CD4-positive, alpha-beta memory T cell (primary cell): ENCODE measurements at regions of chr14 and their contacts with region 1.

Region 1: GRCh38 chr14:52272375-52272774 is 4.9 kb downstream of the PTGDR start:
- DNase-seq: peak in 4 of 5 donors; percentile 43 to 49 (median 46)
- H3K4me3 ChIP-seq: no peak overlapping the region
- H3K4me3 Mint-ChIP-seq: peak overlapping the region in 5 of 8 donors; percentile 16 to 73 (median 33)
- H3K27ac ChIP-seq: no peak overlapping the region
- H3K27ac Mint-ChIP-seq: peak overlapping the region in 3 of 7 donors; percentile 36 to 74 (median 70)
- H3K4me1 ChIP-seq: peaks cover 23% of the 10 kb centered on the region
- H3K4me1 Mint-ChIP-seq: peaks cover 14 to 38% (median 26%) of the 10 kb centered on the region in 4 donors
- H3K27me3 ChIP-seq: peaks cover 12% of the 10 kb centered on the region
- H3K27me3 Mint-ChIP-seq: peaks cover 12 to 16% of the 10 kb centered on the region in 2 donors

Region 2: DNA sequence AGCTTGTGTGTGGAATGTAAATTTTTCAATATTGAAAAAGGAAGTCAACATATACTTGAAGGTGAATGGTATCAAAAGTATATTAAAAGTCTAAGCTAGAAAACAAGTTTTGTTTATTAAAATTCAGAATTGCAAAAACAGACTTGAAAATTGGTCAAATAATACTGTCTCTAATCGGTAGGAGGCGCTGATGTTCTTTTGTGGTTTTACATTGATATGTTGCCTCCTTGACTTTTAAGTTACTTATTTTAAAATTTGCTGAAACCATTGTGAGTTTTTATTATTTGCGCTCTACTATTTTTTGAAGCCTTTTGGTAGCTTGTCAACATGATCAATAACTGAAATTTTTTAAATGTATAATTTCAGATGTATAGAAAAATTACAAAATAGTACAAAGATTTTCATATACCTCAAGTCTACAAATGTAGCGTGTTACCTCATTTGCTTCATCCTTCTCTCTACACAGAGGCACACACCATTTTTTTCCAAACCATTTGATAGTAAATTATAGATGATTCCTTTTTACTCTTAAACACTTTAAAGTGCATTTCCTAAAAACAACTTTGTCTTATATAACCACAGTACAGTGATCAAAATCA is 276.1 kb before region 1 on chr14:
- CTCF ChIA-PET with region 1: interaction called, 13 read pairs
- POLR2A ChIA-PET with region 1: no interaction called
- intact Hi-C with region 1: loop called (anchors 1 kb)
- DNase-seq: peak in 4 of 5 donors; percentile 34 to 51 (median 42)
- H3K4me3 ChIP-seq: no peak overlapping the region
- H3K4me3 Mint-ChIP-seq: no peak overlapping the region
- H3K27ac ChIP-seq: no peak overlapping the region
- H3K27ac Mint-ChIP-seq: peak overlapping the region in 2 of 7 donors; percentile 44 to 59
- H3K4me1 ChIP-seq: peaks cover 22% of the 10 kb centered on the region
- H3K4me1 Mint-ChIP-seq: peaks cover 20 to 32% (median 23%) of the 10 kb centered on the region in 4 donors
- H3K27me3 ChIP-seq: no peaks in the 10 kb centered on the region
- H3K27me3 Mint-ChIP-seq: no peaks in the 10 kb centered on the region

Region 3: GRCh38 chr14:52043690-52044089 is 228.7 kb before region 1 on chr14:
- CTCF ChIA-PET with region 1: interaction called, 37 read pairs
- POLR2A ChIA-PET with region 1: no interaction called
- intact Hi-C with region 1: no loop called
- DNase-seq: peak in 4 of 5 donors; percentile 9 to 32 (median 22)
- H3K4me3 ChIP-seq: no peak overlapping the region
- H3K4me3 Mint-ChIP-seq: peak overlapping the region in 1 of 8 donors; percentile 2
- H3K27ac ChIP-seq: no peak overlapping the region
- H3K27ac Mint-ChIP-seq: peak overlapping the region in 1 of 7 donors; percentile 57
- H3K4me1 ChIP-seq: no peaks in the 10 kb centered on the region
- H3K4me1 Mint-ChIP-seq: peaks cover 0 to 4% (median 1%) of the 10 kb centered on the region in 4 donors
- H3K27me3 ChIP-seq: no peaks in the 10 kb centered on the region
- H3K27me3 Mint-ChIP-seq: peaks cover 0 to 3% of the 10 kb centered on the region in 2 donors

Region 4: GRCh38 chr14:52146504-52146903 is 125.9 kb before region 1 on chr14:
- CTCF ChIA-PET with region 1: interaction called, 16 read pairs
- POLR2A ChIA-PET with region 1: no interaction called
- intact Hi-C with region 1: loop called (anchors 10 kb)
- DNase-seq: no peak
- H3K4me3 ChIP-seq: no peak overlapping the region
- H3K4me3 Mint-ChIP-seq: peak overlapping the region in 1 of 8 donors; percentile 18
- H3K27ac ChIP-seq: no peak overlapping the region
- H3K27ac Mint-ChIP-seq: no peak overlapping the region
- H3K4me1 ChIP-seq: peaks cover 6% of the 10 kb centered on the region
- H3K4me1 Mint-ChIP-seq: peaks cover 3 to 21% (median 18%) of the 10 kb centered on the region in 4 donors
- H3K27me3 ChIP-seq: no peaks in the 10 kb centered on the region
- H3K27me3 Mint-ChIP-seq: peaks cover 0 to 1% of the 10 kb centered on the region in 2 donors

Region 5: GRCh38 chr14:52609445-52610044 is 337.2 kb after region 1 on chr14:
- CTCF ChIA-PET with region 1: no interaction called
- POLR2A ChIA-PET with region 1: no interaction called
- intact Hi-C with region 1: no loop called
- DNase-seq: no peak
- H3K4me3 ChIP-seq: no peak overlapping the region
- H3K4me3 Mint-ChIP-seq: no peak overlapping the region
- H3K27ac ChIP-seq: no peak overlapping the region
- H3K27ac Mint-ChIP-seq: no peak overlapping the region
- H3K4me1 ChIP-seq: no peaks in the 10 kb centered on the region
- H3K4me1 Mint-ChIP-seq: no peaks in the 10 kb centered on the region
- H3K27me3 ChIP-seq: no peaks in the 10 kb centered on the region
- H3K27me3 Mint-ChIP-seq: peaks cover 0 to 9% of the 10 kb centered on the region in 2 donors